ENCODE measurements at regions of chr19 and their contacts with region 1.

Region 1: DNA sequence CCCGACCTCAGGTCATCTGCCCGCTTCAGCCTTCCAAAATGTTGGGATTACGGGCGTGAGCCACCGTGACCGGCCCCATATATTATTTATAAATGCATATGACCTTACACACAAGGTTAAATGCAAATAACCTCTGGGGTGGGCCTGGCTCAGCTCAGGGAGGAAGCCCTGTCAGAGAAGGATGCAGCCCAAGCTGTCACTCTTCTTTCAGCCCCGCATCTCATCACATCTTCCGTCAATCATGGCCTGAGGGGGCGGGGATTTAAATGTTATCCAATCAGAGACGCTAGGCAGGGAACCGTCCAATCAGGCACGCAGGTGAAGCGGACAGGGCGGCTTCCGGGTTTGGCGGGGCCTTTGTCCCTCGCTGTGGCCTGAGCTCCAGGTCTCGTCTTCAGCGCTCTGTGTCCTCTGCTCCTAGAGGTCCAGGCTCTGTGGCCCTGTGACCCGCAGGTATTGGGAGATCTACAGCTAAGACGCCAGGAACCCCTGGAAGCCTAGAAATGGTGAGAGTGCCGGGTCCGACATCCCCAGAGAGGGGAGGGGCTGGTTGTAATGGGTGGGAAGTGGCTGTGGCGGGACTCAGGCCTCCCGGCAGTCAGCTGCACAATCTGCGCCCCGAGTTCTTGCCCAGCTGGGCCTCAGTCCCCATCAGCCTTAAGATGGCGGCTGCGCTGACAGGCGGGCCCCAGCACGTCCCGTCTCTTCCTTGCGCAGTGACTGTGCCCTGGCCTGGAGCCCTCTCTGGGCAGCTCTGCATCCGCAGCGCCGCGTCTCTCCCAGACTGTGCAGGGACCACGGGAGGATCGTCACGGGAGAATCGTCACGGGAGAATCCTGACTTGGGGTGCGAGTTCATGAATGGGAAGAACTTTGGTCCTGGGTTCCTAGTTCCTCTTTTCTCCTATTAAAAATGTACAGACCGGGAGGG is at the start of gene ZNF430:
- DNase-seq: peak; percentile 93
- ATAC-seq: peak; percentile 96
- H3K4me3 ChIP-seq: peak within 1 kb of the TSS; percentile 91 to 94
- H3K27ac ChIP-seq: peak within 1 kb of the TSS; percentile 68
- H3K4me1 ChIP-seq: peaks cover 26 to 30% of the 10 kb centered on the region in 2 experiments
- H3K27me3 ChIP-seq: no peaks in the 10 kb centered on the region
- CTCF ChIP-seq: no peak
- POLR2A ChIP-seq: peak; percentile 55
- RAD21 ChIP-seq: no peak
- total RNA-seq, gene ZNF430: 8.4 TPM

Region 2: GRCh38 chr19:20787766-20788165 is 232.8 kb before region 1 on chr19:
- CTCF ChIA-PET with region 1: no interaction called
- POLR2A ChIA-PET with region 1: no interaction called
- RAD21 ChIA-PET with region 1: no interaction called
- intact Hi-C with region 1: no loop called
- DNase-seq: no peak
- ATAC-seq: no peak
- H3K4me3 ChIP-seq: no peak overlapping the region
- H3K27ac ChIP-seq: no peak overlapping the region
- H3K4me1 ChIP-seq: no peaks in the 10 kb centered on the region
- H3K27me3 ChIP-seq: no peaks in the 10 kb centered on the region
- CTCF ChIP-seq: no peak
- POLR2A ChIP-seq: no peak
- RAD21 ChIP-seq: no peak

Region 3: DNA sequence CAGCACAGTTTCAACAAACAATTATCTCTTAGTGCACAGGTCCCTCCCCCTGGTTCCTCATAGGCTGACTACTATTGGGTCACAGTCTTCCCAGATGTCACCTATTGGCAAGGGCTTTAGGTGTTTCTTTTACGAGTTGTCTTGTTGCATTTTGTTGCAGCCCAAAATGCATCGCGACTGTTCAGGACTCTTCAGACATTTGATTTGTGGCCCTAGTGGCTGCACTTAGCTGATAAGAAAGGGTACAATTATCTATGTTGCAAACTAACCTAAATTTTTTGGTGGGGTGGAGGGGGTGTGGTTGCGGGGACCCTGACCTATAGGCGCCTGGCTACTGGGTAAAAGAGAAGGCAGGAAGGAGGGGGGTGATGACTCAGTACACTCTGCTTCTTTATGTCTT is 32.3 kb after region 1 on chr19:
- CTCF ChIA-PET with region 1: no interaction called
- POLR2A ChIA-PET with region 1: no interaction called
- RAD21 ChIA-PET with region 1: no interaction called
- intact Hi-C with region 1: no loop called
- DNase-seq: no peak
- ATAC-seq: no peak
- H3K4me3 ChIP-seq: no peak overlapping the region
- H3K27ac ChIP-seq: no peak overlapping the region
- H3K4me1 ChIP-seq: no peaks in the 10 kb centered on the region
- H3K27me3 ChIP-seq: no peaks in the 10 kb centered on the region
- CTCF ChIP-seq: no peak
- POLR2A ChIP-seq: no peak
- RAD21 ChIP-seq: no peak

Region 4: GRCh38 chr19:21065336-21065735 is 44.8 kb after region 1 on chr19:
- CTCF ChIA-PET with region 1: no interaction called
- POLR2A ChIA-PET with region 1: no interaction called
- RAD21 ChIA-PET with region 1: no interaction called
- intact Hi-C with region 1: no loop called
- DNase-seq: no peak
- ATAC-seq: no peak
- H3K4me3 ChIP-seq: no peak overlapping the region
- H3K27ac ChIP-seq: no peak overlapping the region
- H3K4me1 ChIP-seq: no peaks in the 10 kb centered on the region
- H3K27me3 ChIP-seq: no peaks in the 10 kb centered on the region
- CTCF ChIP-seq: no peak
- POLR2A ChIP-seq: no peak
- RAD21 ChIP-seq: no peak

Region 5: GRCh38 chr19:21082011-21082975 is 61.7 kb after region 1 on chr19 and contains the start of gene ZNF714:
- CTCF ChIA-PET with region 1: no interaction called
- POLR2A ChIA-PET with region 1: no interaction called
- RAD21 ChIA-PET with region 1: no interaction called
- intact Hi-C with region 1: loop called (anchors 5 kb)
- DNase-seq: peak; percentile 95
- ATAC-seq: peak; percentile 99
- H3K4me3 ChIP-seq: peak within 1 kb of the TSS; percentile 79 to 80
- H3K27ac ChIP-seq: peak within 1 kb of the TSS; percentile 53
- H3K4me1 ChIP-seq: peaks cover 5 to 17% of the 10 kb centered on the region in 2 experiments; a peak in 3 of 4 replicates
- H3K27me3 ChIP-seq: no peaks in the 10 kb centered on the region
- CTCF ChIP-seq: no peak
- POLR2A ChIP-seq: peak; percentile 71
- RAD21 ChIP-seq: no peak; the same call in 1 of the 2 replicates
- total RNA-seq, gene ZNF714: 20.0 TPM

Region 6: GRCh38 chr19:21141787-21142464 is 121.4 kb after region 1 on chr19 and contains the start of gene ZNF431:
- CTCF ChIA-PET with region 1: no interaction called
- POLR2A ChIA-PET with region 1: no interaction called
- RAD21 ChIA-PET with region 1: no interaction called
- intact Hi-C with region 1: loop called (anchors 5 kb)
- DNase-seq: peak; percentile 92
- ATAC-seq: peak; percentile 99
- H3K4me3 ChIP-seq: peak within 1 kb of the TSS; percentile 87 to 98
- H3K27ac ChIP-seq: peak within 1 kb of the TSS; percentile 65
- H3K4me1 ChIP-seq: peaks cover 6 to 16% of the 10 kb centered on the region in 2 experiments; a peak in 3 of 4 replicates
- H3K27me3 ChIP-seq: no peaks in the 10 kb centered on the region
- CTCF ChIP-seq: no peak
- POLR2A ChIP-seq: peak; percentile 37
- RAD21 ChIP-seq: no peak
- total RNA-seq, gene ZNF431: 9.2 TPM

Measured in HCT116 (cell line).